ENCODE measurements at regions of chr20 and their contacts with region 1.

Region 1: GRCh38 chr20:34538671-34539123 is 19.8 kb upstream of the MAP1LC3A start:
- DNase-seq: peak; percentile 74
- H3K4me3 Mint-ChIP-seq: no peak overlapping the region
- H3K27ac Mint-ChIP-seq: no peak overlapping the region
- H3K4me1 Mint-ChIP-seq: peaks cover 34% of the 10 kb centered on the region
- H3K27me3 Mint-ChIP-seq: no peaks in the 10 kb centered on the region

Region 2: GRCh38 chr20:34558320-34559218 is 19.9 kb after region 1 on chr20 and contains the start of gene MAP1LC3A:
- CTCF ChIA-PET with region 1: interaction called, 10 read pairs
- POLR2A ChIA-PET with region 1: interaction called, 4 read pairs
- intact Hi-C with region 1: no loop called
- DNase-seq: peak; percentile 95
- H3K4me3 Mint-ChIP-seq: peak within 1 kb of the TSS; percentile 83
- H3K27ac Mint-ChIP-seq: peak within 1 kb of the TSS; percentile 80
- H3K4me1 Mint-ChIP-seq: peaks cover 16% of the 10 kb centered on the region
- H3K27me3 Mint-ChIP-seq: no peaks in the 10 kb centered on the region
- total RNA-seq, gene MAP1LC3A: 4.6 to 5.6 TPM

Region 3: GRCh38 chr20:34709831-34710567 is 171.3 kb after region 1 on chr20:
- CTCF ChIA-PET with region 1: interaction called, 138 read pairs
- POLR2A ChIA-PET with region 1: no interaction called
- intact Hi-C with region 1: loop called (anchors 1 kb)
- DNase-seq: no peak
- H3K4me3 Mint-ChIP-seq: peak overlapping the region; percentile 78
- H3K27ac Mint-ChIP-seq: peak overlapping the region; percentile 81
- H3K4me1 Mint-ChIP-seq: peaks cover 19% of the 10 kb centered on the region
- H3K27me3 Mint-ChIP-seq: no peaks in the 10 kb centered on the region

Measured in activated CD4-positive, alpha-beta memory T cell treated with anti-CD3 and anti-CD28 coated beads for 36 hours (primary cell).